ENCODE measurements at regions of chr6 and their contacts with region 1.

Region 1: GRCh38 chr6:33620856-33621710 is at the start of gene ITPR3:
- DNase-seq: peak; percentile 78 to 85 (median 83)
- H3K4me3 ChIP-seq: peak within 1 kb of the TSS; percentile 71 to 88
- H3K4me3 Mint-ChIP-seq: peak within 1 kb of the TSS; percentile 93 to 99 (median 96)
- H3K27ac ChIP-seq: peak within 1 kb of the TSS; percentile 92
- H3K27ac Mint-ChIP-seq: peak within 1 kb of the TSS; percentile 91 to 98 (median 97)
- H3K4me1 ChIP-seq: peaks cover 48% of the 10 kb centered on the region
- H3K4me1 Mint-ChIP-seq: peaks cover 35 to 62% (median 48%) of the 10 kb centered on the region in 4 donors
- H3K27me3 ChIP-seq: no peaks in the 10 kb centered on the region
- H3K27me3 Mint-ChIP-seq: no peaks in the 10 kb centered on the region
- total RNA-seq, gene ITPR3: 71.2 to 72.4 TPM

Region 2: DNA sequence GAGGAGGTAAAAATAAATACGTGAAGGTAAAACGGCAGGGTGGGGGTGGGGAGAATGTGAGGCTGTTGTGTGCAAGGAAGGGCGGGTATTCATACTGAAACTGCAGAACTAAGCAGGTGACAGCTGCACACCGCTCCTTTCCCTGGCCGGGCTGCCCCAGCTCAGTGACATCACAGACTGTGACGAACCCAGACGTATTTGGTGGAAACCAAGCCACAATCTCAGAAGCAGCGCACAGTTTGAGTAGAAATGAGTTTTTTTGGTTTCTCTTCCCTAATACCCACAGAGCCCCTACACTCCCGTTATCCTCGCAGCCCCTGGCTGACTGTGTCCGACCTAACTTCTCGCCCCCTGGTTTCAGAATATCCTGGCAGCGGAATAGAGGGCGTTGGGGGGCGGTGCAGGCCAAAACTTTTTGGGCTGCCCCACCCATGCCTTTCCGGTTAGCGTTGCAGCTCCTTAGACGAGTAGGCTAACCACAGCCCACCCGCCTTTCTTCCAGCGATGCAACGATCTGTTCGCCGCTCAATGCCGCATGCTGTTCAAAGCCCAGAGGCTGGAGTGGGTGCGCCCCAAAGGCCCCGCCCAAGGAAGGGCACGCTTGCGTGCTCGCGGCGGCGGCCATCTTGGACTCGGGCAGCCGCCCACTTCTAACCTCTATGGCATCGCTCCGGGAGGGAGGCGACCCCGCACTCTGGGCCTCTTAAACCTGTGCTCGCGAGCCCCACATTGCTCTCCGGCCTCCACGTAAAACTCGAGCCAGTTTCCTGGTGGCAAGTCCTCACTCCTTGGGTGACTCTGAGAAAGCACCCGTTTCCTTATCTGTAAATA is 50.1 kb before region 1 on chr6:
- CTCF ChIA-PET with region 1: no interaction called
- POLR2A ChIA-PET with region 1: interaction called, 12 read pairs
- intact Hi-C with region 1: no loop called
- DNase-seq: peak; percentile 92 to 98 (median 95)
- H3K4me3 ChIP-seq: peak overlapping the region; percentile 13 to 72
- H3K4me3 Mint-ChIP-seq: peak overlapping the region; percentile 90 to 97 (median 94)
- H3K27ac ChIP-seq: peak overlapping the region; percentile 93
- H3K27ac Mint-ChIP-seq: peak overlapping the region; percentile 99 to 100 (median 100)
- H3K4me1 ChIP-seq: peaks cover 23% of the 10 kb centered on the region
- H3K4me1 Mint-ChIP-seq: peaks cover 12 to 44% (median 31%) of the 10 kb centered on the region in 4 donors
- H3K27me3 ChIP-seq: no peaks in the 10 kb centered on the region
- H3K27me3 Mint-ChIP-seq: no peaks in the 10 kb centered on the region

Region 3: GRCh38 chr6:33592411-33593054 is 28.6 kb before region 1 on chr6:
- CTCF ChIA-PET with region 1: interaction called, 24 read pairs
- POLR2A ChIA-PET with region 1: interaction called, 24 read pairs
- intact Hi-C with region 1: loop called (anchors 2 kb)
- DNase-seq: peak; percentile 41 to 73 (median 44)
- H3K4me3 ChIP-seq: peak overlapping the region; percentile 6 to 52
- H3K4me3 Mint-ChIP-seq: peak overlapping the region; percentile 67 to 91 (median 86)
- H3K27ac ChIP-seq: peak overlapping the region; percentile 17
- H3K27ac Mint-ChIP-seq: peak overlapping the region; percentile 75 to 96 (median 92)
- H3K4me1 ChIP-seq: peaks cover 14% of the 10 kb centered on the region
- H3K4me1 Mint-ChIP-seq: peaks cover 12 to 23% (median 17%) of the 10 kb centered on the region in 4 donors
- H3K27me3 ChIP-seq: no peaks in the 10 kb centered on the region
- H3K27me3 Mint-ChIP-seq: no peaks in the 10 kb centered on the region

Region 4: DNA sequence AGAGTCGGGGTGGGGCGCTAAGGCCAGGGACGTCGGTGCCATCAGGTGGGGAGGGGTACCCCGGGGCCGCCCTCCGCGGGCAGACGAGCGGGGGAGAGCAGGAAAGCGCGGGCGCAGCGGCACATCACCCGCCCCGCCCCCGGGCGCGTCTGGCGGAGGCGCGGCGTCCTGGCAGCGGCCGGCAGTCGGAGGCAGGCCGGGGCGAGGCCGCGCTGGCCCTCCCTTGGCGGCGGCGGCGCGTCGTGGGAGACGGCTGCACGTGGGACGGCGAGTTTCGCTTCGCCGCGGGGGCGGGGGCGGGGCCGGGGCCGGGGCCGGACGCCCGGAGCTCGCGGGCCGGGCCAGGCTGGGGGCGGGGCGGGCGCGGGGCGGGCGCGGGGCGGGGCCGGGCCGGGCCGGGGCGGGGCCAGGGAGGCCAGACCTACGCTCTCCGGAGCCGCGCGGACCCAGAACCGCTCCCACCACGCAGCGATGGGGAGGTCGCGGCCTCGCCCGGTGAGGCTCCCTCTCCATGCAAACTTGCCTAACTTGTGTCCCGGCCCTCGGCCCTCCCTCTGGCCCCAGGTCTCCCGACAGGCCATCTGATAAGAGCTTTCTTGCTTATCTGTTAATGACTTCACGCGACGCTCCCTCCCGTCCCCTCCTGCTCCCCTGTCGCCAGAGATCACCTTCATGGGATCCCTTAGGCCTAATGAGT is 12.5 kb after region 1 on chr6:
- CTCF ChIA-PET with region 1: interaction called, 20 read pairs
- POLR2A ChIA-PET with region 1: interaction called, 40 read pairs
- intact Hi-C with region 1: loop called (anchors 1 kb)
- DNase-seq: peak; percentile 50 to 57 (median 55)
- H3K4me3 ChIP-seq: peak overlapping the region in 1 of 2 donors; percentile 40
- H3K4me3 Mint-ChIP-seq: peak overlapping the region; percentile 85 to 94 (median 87)
- H3K27ac ChIP-seq: peak overlapping the region; percentile 35
- H3K27ac Mint-ChIP-seq: peak overlapping the region; percentile 84 to 93 (median 90)
- H3K4me1 ChIP-seq: peaks cover 39% of the 10 kb centered on the region
- H3K4me1 Mint-ChIP-seq: peaks cover 40 to 80% (median 58%) of the 10 kb centered on the region in 4 donors
- H3K27me3 ChIP-seq: no peaks in the 10 kb centered on the region
- H3K27me3 Mint-ChIP-seq: no peaks in the 10 kb centered on the region

Region 5: DNA sequence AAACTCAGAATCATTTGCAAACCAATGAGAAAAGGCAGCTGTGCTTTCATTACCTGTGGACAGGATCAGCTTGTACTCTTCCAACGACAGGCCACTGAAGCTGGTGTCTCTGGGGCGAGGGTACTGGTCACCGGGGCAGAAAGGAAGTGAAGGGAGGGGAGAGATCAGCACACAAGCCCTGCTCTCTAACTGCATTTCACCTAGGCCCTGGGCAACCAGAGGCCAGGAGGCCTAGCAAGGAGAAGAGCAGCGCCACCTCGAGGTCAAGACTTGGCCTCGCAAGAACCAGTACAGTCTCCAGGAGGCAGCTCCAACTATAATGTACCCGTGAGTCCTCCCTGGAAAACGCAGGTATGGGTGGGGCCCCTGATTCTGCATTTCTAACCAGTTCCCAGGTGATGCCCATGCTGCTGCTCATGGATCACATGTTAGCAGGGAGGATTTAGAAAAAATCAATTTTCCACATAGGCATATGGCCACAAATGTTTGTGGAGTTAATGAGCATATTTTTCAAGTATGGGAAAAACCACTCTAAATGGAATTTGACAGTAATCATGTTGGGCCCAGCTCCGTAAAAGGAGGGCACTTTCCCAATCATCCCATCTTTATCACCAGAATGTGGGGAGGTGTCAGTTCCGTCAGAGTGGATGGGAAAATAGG is 79.4 kb after region 1 on chr6:
- CTCF ChIA-PET with region 1: interaction called, 5 read pairs
- POLR2A ChIA-PET with region 1: interaction called, 44 read pairs
- intact Hi-C with region 1: no loop called
- DNase-seq: peak; percentile 69 to 77 (median 71)
- H3K4me3 ChIP-seq: no peak overlapping the region
- H3K4me3 Mint-ChIP-seq: peak overlapping the region in 1 of 8 donors; percentile 53
- H3K27ac ChIP-seq: peak overlapping the region; percentile 12
- H3K27ac Mint-ChIP-seq: peak overlapping the region; percentile 35 to 93 (median 90)
- H3K4me1 ChIP-seq: peaks cover 32% of the 10 kb centered on the region
- H3K4me1 Mint-ChIP-seq: peaks cover 21 to 49% (median 33%) of the 10 kb centered on the region in 4 donors
- H3K27me3 ChIP-seq: no peaks in the 10 kb centered on the region
- H3K27me3 Mint-ChIP-seq: no peaks in the 10 kb centered on the region

Measured in CD4-positive, alpha-beta memory T cell (primary cell).